ENCODE measurements at regions of chr9 and their contacts with region 1.

Region 1: GRCh38 chr9:15357050-15357653 is 50.1 kb upstream of the TTC39B start:
- DNase-seq: peak; percentile 62
- H3K4me3 Mint-ChIP-seq: no peak overlapping the region
- H3K27ac Mint-ChIP-seq: no peak overlapping the region
- H3K4me1 Mint-ChIP-seq: peaks cover 9% of the 10 kb centered on the region
- H3K27me3 Mint-ChIP-seq: no peaks in the 10 kb centered on the region

Region 2: DNA sequence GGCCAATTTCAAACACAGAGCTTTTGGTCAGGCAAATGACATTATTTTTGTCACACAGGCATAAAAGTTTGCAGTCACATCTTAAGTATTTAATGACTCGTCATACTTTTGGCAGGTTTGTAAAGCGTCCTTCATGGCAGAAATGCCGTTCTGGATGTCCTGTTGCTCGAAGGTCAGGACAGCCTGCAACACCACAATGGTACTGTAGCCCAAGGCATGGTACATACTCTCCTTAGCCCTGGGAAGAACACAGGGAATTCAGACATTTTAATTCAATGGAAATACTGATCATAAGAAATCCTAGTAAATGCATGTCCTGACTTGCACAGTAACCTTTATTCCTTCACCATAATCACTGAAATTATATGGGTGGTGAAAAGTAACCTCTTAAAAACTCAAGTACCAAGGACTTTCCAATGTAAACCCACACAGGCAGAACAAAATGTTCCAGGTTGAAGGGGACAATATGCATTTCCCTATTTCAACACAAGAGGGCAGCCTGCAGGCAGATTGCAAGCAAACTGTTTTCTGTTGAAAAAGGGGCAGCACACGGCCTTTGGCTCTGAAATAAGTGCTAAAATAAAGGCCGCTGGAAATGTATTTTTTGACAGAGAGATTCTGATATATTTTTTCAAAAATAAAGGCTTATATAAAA is 145.9 kb before region 1 on chr9:
- CTCF ChIA-PET with region 1: no interaction called
- intact Hi-C with region 1: loop called (anchors 1 kb)
- DNase-seq: peak; percentile 69
- H3K4me3 Mint-ChIP-seq: no peak overlapping the region
- H3K27ac Mint-ChIP-seq: no peak overlapping the region
- H3K4me1 Mint-ChIP-seq: peaks cover 14% of the 10 kb centered on the region
- H3K27me3 Mint-ChIP-seq: no peaks in the 10 kb centered on the region

Region 3: DNA sequence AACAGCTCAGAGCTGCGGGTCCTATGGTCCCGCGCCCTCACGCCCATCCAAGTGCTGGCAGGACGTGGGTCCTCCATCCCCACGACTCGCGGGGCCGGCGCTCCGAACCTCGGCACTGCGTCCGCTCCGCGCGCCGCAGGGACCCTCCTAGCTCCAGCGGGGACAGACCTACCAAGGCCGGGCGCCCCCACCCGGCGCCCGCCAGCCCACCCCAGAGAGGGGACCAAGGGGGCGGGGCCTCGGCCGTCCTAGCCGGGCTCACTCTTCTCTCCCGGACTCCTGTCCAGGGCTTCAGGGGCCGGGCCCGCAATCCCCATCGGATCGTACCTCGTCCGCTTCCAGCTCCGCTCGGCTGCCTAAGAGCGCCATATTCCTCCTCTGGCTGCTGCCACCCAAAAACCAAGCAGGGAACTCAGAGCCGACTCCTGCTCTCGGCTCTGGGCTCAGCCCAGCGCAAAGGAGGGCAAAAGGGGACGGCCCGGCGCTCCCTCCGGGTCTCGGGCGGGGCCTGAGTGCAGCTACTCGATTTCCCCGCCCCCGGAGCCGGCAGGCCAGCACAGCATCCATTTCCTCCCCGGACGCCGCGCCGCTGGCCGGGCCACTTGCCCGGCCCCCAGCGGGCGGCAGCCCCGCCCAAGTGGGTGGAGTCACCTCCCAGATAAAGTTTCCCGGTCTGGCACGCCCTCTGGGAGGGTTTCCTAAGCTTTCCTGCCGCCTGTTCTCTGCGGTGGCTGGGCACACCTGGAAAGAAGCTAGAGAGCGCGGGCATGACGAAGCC is 50.2 kb before region 1 on chr9 and contains the start of gene TTC39B:
- CTCF ChIA-PET with region 1: interaction called, 3 read pairs
- intact Hi-C with region 1: loop called (anchors 2 kb)
- DNase-seq: peak; percentile 86
- H3K4me3 Mint-ChIP-seq: peak within 1 kb of the TSS; percentile 99
- H3K27ac Mint-ChIP-seq: peak within 1 kb of the TSS; percentile 95
- H3K4me1 Mint-ChIP-seq: peaks cover 57% of the 10 kb centered on the region
- H3K27me3 Mint-ChIP-seq: no peaks in the 10 kb centered on the region
- total RNA-seq, gene TTC39B: 43.9 to 46.4 TPM

Region 4: GRCh38 chr9:15485836-15486666 is 128.9 kb after region 1 on chr9:
- CTCF ChIA-PET with region 1: interaction called, 5 read pairs
- intact Hi-C with region 1: loop called (anchors 1 kb)
- DNase-seq: no peak
- H3K4me3 Mint-ChIP-seq: no peak overlapping the region
- H3K27ac Mint-ChIP-seq: peak overlapping the region; percentile 80
- H3K4me1 Mint-ChIP-seq: peaks cover 47% of the 10 kb centered on the region
- H3K27me3 Mint-ChIP-seq: no peaks in the 10 kb centered on the region

Region 5: GRCh38 chr9:15529566-15530324 is 172.6 kb after region 1 on chr9:
- CTCF ChIA-PET with region 1: interaction called, 3 read pairs
- intact Hi-C with region 1: loop called (anchors 1 kb)
- DNase-seq: no peak
- H3K4me3 Mint-ChIP-seq: no peak overlapping the region
- H3K27ac Mint-ChIP-seq: no peak overlapping the region
- H3K4me1 Mint-ChIP-seq: peaks cover 11% of the 10 kb centered on the region
- H3K27me3 Mint-ChIP-seq: no peaks in the 10 kb centered on the region

Region 6: GRCh38 chr9:15642369-15642962 is 285.3 kb after region 1 on chr9:
- CTCF ChIA-PET with region 1: no interaction called
- intact Hi-C with region 1: loop called (anchors 1 kb)
- DNase-seq: no peak
- H3K4me3 Mint-ChIP-seq: no peak overlapping the region
- H3K27ac Mint-ChIP-seq: no peak overlapping the region
- H3K4me1 Mint-ChIP-seq: no peaks in the 10 kb centered on the region
- H3K27me3 Mint-ChIP-seq: no peaks in the 10 kb centered on the region